Left colon (tissue), 2 donors: ENCODE measurements at regions of chr1 and their contacts with region 1.

Region 1: GRCh38 chr1:109532365-109533136 is 7.1 kb upstream of the GPR61 start:
- DNase-seq: peak; percentile 70 to 80
- ATAC-seq: peak; percentile 94

Region 2: DNA sequence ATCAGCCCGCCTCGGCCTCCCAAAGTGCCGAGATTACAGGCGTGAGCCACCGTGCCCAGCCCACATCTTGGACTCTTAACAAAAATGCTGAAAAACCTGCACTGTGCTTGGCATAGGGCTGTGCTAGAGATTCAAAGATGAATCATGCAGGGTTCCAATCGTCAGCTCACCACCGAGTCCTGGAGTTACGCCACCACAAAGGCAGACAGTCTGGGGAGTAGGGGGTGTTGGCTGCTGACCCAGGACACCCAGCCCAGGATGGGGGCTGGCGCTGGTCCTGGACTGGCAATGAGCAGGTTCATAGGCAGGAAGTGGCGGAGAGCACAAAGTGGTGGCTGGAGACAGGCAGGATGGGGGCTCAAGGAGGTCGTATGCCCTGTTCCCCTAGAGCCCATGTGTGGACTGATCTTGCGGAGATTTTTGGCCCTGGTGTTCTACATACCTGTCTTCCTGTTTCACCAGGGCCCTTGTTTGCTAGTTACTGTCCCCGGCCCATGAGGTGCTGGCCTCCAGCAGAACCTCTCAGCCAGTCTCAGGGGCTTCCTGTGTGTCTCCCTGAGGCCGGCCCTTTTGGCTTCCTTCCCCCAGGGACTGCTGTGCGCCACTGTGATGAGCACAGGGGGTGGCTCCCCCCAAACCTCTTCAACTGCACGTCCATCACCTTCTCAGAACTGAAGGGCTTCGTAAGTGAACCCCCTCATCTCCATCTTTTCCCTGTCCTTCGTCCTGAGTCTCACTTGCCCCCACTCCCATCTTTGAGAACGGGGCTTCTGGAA is 265.4 kb before region 1 on chr1:
- intact Hi-C with region 1: loop called in 1 of 2 experiments (anchors 5 kb)
- DNase-seq: peak in 1 of 2 donors; percentile 19
- ATAC-seq: no peak

Region 3: GRCh38 chr1:109493805-109494539 is 38.6 kb before region 1 on chr1 and contains the start of gene CYB561D1:
- intact Hi-C with region 1: loop called (anchors 5 kb)
- DNase-seq: peak; percentile 85 to 87
- ATAC-seq: peak; percentile 93
- total RNA-seq, gene CYB561D1: 10.0 to 18.7 TPM

Region 4: GRCh38 chr1:109499661-109500536 is 32.7 kb before region 1 on chr1:
- intact Hi-C with region 1: loop called in 1 of 2 experiments (anchors 5 kb)
- DNase-seq: peak; percentile 80 to 82
- ATAC-seq: peak; percentile 85